ENCODE measurements at regions of chr6 and their contacts with region 1.

Region 1: DNA sequence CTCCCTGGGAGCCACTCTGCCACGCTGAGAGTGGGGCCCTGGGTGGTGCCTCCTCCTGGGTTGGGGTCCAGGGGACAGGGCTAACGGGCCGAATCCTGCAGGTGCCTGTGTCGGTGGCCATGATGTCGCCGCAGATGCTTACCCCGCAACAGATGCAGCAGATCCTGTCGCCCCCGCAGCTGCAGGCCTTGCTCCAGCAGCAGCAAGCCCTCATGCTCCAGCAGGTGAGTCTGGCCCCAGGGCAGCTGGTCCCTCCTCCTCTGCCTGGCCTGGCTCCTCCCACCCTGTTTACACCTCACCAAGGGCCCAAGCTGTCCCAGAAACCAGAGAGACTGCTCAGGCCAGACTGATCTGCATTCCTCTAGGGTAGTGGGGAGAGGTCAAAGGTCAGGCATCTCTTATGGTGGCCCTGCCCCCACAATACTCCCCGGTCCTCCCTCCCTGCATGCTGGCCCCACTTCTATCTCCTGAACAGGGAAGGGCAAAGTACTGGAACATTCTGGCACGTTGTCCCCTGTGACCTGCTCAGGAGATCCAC is 38.6 kb downstream of the FOXP4 start:
- DNase-seq: peak; percentile 84
- ATAC-seq: peak; percentile 90
- H3K4me3 Mint-ChIP-seq: no peak overlapping the region
- H3K27ac Mint-ChIP-seq: no peak overlapping the region; the same call in 1 of the 2 replicates
- H3K4me1 Mint-ChIP-seq: peaks cover 67% of the 10 kb centered on the region
- H3K27me3 Mint-ChIP-seq: no peaks in the 10 kb centered on the region
- CTCF ChIP-seq: no peak

Region 2: GRCh38 chr6:41568585-41569384 is 16.0 kb before region 1 on chr6:
- CTCF ChIA-PET with region 1: interaction called, 14 read pairs
- POLR2A ChIA-PET with region 1: no interaction called
- DNase-seq: peak; percentile 10
- ATAC-seq: no peak
- H3K4me3 Mint-ChIP-seq: no peak overlapping the region
- H3K27ac Mint-ChIP-seq: no peak overlapping the region
- H3K4me1 Mint-ChIP-seq: peaks cover 61% of the 10 kb centered on the region
- H3K27me3 Mint-ChIP-seq: no peaks in the 10 kb centered on the region; the same call in 1 of the 2 replicates
- CTCF ChIP-seq: no peak